Posterior vena cava (tissue), 2 donors: ENCODE measurements at regions of chr9 and their contacts with region 1.

Region 1: DNA sequence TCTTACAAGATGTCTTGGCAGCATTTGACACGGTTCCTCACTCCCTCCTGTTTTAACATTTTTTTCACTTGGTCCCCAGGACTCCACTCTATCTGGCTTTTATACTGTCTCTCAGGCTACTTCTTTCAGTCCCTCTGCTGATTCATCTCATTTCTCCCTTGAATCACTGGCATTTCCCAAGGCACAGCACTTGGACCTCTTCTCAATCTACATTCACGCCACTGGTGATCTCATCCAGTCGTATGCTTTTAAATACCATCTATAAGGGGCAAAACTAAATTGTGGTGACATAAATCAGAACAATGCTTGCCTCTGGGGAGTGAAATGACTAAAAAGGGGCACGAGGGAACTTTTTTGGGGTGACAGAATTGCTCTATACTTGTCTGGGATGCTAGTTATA is 47.1 kb downstream of the MAPKAP1 start:
- DNase-seq: no peak

Region 2: DNA sequence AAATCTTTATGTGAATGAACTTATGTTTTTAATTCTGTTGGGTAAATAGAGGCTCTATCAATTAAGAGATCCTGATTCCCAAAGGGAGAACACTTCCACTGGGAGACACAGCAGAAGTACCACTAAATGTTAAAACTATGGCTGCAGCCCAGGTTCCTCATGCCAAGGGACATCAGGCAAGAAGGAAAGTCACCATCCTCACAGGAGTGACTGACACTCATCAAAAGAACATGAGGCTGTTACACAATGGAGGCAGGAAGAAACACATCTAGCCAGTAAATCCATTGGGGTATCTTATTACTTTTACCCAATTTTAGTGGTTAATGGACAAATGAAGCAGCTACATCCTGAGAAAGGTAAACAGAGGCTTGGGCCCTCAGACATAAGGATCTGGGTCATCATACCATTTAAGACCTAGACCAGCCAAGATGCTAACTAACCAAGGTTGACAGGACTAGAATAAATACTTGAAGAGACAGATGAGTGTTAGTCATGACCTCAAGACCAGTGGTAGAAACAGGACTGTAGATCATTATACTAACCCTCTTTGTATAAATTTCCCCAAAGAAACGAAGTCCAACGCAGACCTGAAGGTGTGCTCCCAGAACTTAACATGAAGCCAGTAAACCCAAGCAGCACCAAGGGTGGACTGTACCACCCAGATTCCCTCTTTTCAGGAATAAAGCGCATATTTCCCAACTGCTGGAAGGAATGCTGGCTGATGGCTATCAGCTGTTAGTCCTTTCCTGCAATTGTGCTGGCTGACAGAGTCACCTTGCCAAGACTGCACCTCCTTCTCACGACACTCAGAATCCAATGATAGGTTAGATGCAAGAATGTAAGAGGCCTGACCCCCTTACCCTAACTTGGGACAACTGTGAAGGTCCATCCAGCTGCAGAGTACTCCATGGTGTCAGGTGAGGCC is 47.1 kb before region 1 on chr9:
- intact Hi-C with region 1: loop called in 1 of 2 experiments (anchors 5 kb)
- DNase-seq: no peak